Posterior vena cava (tissue), 2 donors: ENCODE measurements at regions of chr1 and their contacts with region 1.

Region 1: GRCh38 chr1:218575856-218576255 is 230.7 kb downstream of the TGFB2 start:
- DNase-seq: no peak

Region 2: GRCh38 chr1:218439541-218440295 is 136.1 kb before region 1 on chr1:
- intact Hi-C with region 1: loop called in 1 of 2 experiments (anchors 5 kb)
- DNase-seq: no peak

Region 3: DNA sequence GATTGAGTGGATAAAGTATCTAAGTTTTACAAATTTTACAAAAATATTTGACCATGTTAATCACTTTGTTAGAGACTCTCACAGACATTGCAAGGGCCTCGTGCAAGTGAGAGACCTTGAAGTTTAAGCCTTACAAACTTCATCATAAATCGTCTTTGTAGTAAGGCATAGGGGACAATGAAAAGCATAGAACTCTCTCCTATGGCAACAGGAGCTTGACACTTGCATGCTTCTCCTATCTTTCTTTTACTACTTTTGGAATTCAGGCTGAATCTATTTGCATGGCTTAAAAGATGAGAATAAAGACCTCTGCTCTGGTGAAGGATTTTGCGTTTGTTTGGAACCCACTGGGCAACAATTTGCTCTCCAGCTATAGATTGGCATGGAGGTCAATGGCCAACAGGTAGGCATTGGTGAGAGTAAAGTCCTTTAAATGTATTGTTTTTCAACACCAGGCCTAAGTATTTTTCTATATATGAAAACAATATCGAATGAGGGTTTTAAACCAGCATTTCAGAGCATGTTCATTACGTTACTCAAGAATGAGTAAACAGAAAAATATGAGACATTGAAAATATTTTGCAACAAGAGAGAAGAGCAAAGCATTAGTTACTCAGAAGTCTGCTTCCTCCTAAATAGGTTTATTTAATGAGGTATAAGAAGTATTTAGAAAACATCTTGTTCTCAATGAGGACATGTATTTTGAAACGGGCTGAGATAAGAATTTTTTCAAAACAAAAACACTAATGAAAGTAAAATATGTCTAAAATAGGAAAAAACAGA is 38.5 kb before region 1 on chr1:
- intact Hi-C with region 1: no loop called
- DNase-seq: no peak

Region 4: GRCh38 chr1:218633238-218633988 is 57.6 kb after region 1 on chr1:
- intact Hi-C with region 1: no loop called
- DNase-seq: no peak

Region 5: GRCh38 chr1:218755128-218755527 is 179.3 kb after region 1 on chr1:
- intact Hi-C with region 1: no loop called
- DNase-seq: no peak